GM12878 (cell line): ENCODE measurements at regions of chrX and their contacts with region 1.

Region 1: DNA sequence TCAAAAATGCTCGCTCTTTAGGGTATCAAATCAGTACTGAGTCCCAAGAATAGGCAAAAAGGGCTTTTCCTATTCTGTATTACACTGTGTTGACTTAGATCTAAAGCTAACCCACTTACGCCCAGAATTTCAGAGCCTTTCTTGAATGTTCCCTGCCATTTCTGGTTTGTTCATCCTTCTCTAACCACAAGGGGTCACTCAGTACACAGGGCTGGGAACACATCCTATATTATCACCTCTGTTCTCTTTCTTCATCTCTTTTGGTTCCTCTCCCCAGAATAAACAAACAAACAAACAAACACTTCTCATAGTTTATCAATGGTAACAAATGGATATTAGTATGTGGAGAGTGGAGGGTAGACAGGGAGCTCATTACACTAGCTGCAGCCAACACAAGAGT is 25.5 kb upstream of the MORC4 start:
- DNase-seq: no peak
- ATAC-seq: peak; percentile 60
- H3K4me3 ChIP-seq: no peak overlapping the region
- H3K27ac ChIP-seq: no peak overlapping the region
- H3K4me1 ChIP-seq: no peaks in the 10 kb centered on the region
- H3K27me3 ChIP-seq: no peaks in the 10 kb centered on the region
- CTCF ChIP-seq: peak; percentile 32 to 59 (median 50); a peak in 5 of 6 replicates
- EP300 ChIP-seq: no peak
- POLR2A ChIP-seq: no peak
- RAD21 ChIP-seq: peak; percentile 80

Region 2: GRCh38 chrX:106894392-106894909 is 131.1 kb before region 1 on chrX:
- CTCF ChIA-PET with region 1: no interaction called
- POLR2A ChIA-PET with region 1: no interaction called
- RAD21 ChIA-PET with region 1: no interaction called
- SMC1A ChIA-PET with region 1: no interaction called
- in situ Hi-C with region 1: no loop called
- intact Hi-C with region 1: no loop called
- DNase-seq: no peak
- ATAC-seq: peak; percentile 79
- H3K4me3 ChIP-seq: no peak overlapping the region
- H3K27ac ChIP-seq: no peak overlapping the region
- H3K4me1 ChIP-seq: no peaks in the 10 kb centered on the region
- H3K27me3 ChIP-seq: no peaks in the 10 kb centered on the region; a peak in 1 of 4 replicates
- CTCF ChIP-seq: peak; percentile 79 to 85 (median 83)
- EP300 ChIP-seq: no peak
- POLR2A ChIP-seq: no peak
- RAD21 ChIP-seq: peak; percentile 63

Region 3: GRCh38 chrX:107324499-107325320 is 299.2 kb after region 1 on chrX:
- CTCF ChIA-PET with region 1: interaction called, 3 read pairs
- POLR2A ChIA-PET with region 1: no interaction called
- RAD21 ChIA-PET with region 1: no interaction called
- SMC1A ChIA-PET with region 1: interaction called, 3 read pairs
- in situ Hi-C with region 1: no loop called
- intact Hi-C with region 1: loop called (anchors 10 kb)
- DNase-seq: no peak
- ATAC-seq: peak; percentile 63
- H3K4me3 ChIP-seq: no peak overlapping the region
- H3K27ac ChIP-seq: no peak overlapping the region
- H3K4me1 ChIP-seq: no peaks in the 10 kb centered on the region
- H3K27me3 ChIP-seq: no peaks in the 10 kb centered on the region
- CTCF ChIP-seq: peak in 1 of 3 experiments; percentile 8; a peak in 2 of 6 replicates
- EP300 ChIP-seq: no peak
- POLR2A ChIP-seq: no peak
- RAD21 ChIP-seq: peak; percentile 27; the same call in 1 of the 2 replicates

Region 4: DNA sequence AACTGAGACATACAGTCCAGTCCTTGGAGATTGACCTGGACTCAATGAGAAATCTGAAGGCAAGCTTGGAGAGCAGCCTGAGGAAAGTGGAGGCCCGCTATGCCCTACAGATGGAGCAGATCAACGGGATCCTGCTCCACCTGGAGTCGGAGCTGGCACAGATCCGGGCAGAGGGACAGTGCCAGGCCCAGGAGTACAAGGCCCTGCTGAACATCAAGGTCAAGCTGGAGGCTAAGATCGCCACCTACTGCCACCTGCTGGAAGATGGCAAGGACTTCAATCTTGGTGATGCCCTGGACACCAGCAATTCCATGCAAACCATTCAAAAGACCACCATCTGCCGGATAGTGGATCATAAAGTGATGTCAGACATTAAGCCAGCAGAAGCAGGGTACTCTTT is 403.5 kb after region 1 on chrX:
- CTCF ChIA-PET with region 1: interaction called, 4 read pairs
- POLR2A ChIA-PET with region 1: no interaction called
- RAD21 ChIA-PET with region 1: no interaction called
- SMC1A ChIA-PET with region 1: interaction called, 3 read pairs
- in situ Hi-C with region 1: no loop called
- intact Hi-C with region 1: loop called (anchors 2 kb)
- DNase-seq: no peak
- ATAC-seq: no peak
- H3K4me3 ChIP-seq: no peak overlapping the region
- H3K27ac ChIP-seq: no peak overlapping the region
- H3K4me1 ChIP-seq: no peaks in the 10 kb centered on the region
- H3K27me3 ChIP-seq: no peaks in the 10 kb centered on the region; a peak in 1 of 4 replicates
- CTCF ChIP-seq: peak; percentile 42 to 61 (median 45)
- EP300 ChIP-seq: no peak
- POLR2A ChIP-seq: no peak
- RAD21 ChIP-seq: peak; percentile 42; the same call in 1 of the 2 replicates

Region 5: DNA sequence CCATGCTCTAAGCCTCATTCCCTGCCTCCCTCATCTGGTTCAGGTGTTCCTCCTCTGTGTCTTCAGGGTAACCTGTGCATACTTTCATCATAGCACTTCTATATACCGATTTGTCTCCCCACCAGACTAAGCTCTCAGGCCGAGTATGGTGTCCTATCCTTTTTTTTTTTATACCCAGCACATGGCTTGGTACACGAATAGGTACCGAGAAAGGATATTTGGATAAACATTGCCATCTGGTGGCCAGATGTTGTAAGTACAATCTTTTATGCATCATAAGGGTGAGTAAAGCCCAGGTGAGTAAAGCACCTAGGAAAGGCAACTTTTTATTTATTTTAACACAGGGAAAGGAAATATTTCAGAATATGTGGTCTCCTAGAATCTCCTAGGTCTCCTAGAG is 868.5 kb after region 1 on chrX:
- CTCF ChIA-PET with region 1: no interaction called
- POLR2A ChIA-PET with region 1: no interaction called
- RAD21 ChIA-PET with region 1: no interaction called
- SMC1A ChIA-PET with region 1: no interaction called
- in situ Hi-C with region 1: no loop called
- intact Hi-C with region 1: loop called (anchors 10 kb)
- DNase-seq: peak; percentile 20
- ATAC-seq: peak; percentile 87
- H3K4me3 ChIP-seq: no peak overlapping the region
- H3K27ac ChIP-seq: no peak overlapping the region
- H3K4me1 ChIP-seq: no peaks in the 10 kb centered on the region
- H3K27me3 ChIP-seq: no peaks in the 10 kb centered on the region
- CTCF ChIP-seq: peak; percentile 47 to 63 (median 54)
- EP300 ChIP-seq: no peak
- POLR2A ChIP-seq: no peak
- RAD21 ChIP-seq: peak; percentile 68